ENCODE measurements at regions of chr1 and their contacts with region 1.

Region 1: GRCh38 chr1:236018885-236019453 is 45.9 kb downstream of the NID1 start:
- DNase-seq: peak; percentile 87
- ATAC-seq: peak; percentile 91

Region 2: GRCh38 chr1:235984041-235984825 is 34.7 kb before region 1 on chr1:
- intact Hi-C with region 1: loop called (anchors 5 kb)
- DNase-seq: no peak
- ATAC-seq: no peak

Region 3: GRCh38 chr1:236064674-236065508 is 45.9 kb after region 1 on chr1 and contains the start of gene NID1:
- intact Hi-C with region 1: loop called (anchors 5 kb)
- DNase-seq: peak; percentile 94
- ATAC-seq: peak; percentile 86
- total RNA-seq, gene NID1: 65.8 TPM